ENCODE measurements at regions of chr17 and their contacts with region 1.

Region 1: GRCh38 chr17:4565209-4566141 is 5.1 kb upstream of the GGT6 start:
- DNase-seq: peak; percentile 55
- ATAC-seq: peak; percentile 85
- H3K4me3 ChIP-seq: no peak overlapping the region
- H3K27ac ChIP-seq: no peak overlapping the region
- H3K4me1 ChIP-seq: no peaks in the 10 kb centered on the region
- H3K27me3 ChIP-seq: no peaks in the 10 kb centered on the region
- CTCF ChIP-seq: peak; percentile 92

Region 2: DNA sequence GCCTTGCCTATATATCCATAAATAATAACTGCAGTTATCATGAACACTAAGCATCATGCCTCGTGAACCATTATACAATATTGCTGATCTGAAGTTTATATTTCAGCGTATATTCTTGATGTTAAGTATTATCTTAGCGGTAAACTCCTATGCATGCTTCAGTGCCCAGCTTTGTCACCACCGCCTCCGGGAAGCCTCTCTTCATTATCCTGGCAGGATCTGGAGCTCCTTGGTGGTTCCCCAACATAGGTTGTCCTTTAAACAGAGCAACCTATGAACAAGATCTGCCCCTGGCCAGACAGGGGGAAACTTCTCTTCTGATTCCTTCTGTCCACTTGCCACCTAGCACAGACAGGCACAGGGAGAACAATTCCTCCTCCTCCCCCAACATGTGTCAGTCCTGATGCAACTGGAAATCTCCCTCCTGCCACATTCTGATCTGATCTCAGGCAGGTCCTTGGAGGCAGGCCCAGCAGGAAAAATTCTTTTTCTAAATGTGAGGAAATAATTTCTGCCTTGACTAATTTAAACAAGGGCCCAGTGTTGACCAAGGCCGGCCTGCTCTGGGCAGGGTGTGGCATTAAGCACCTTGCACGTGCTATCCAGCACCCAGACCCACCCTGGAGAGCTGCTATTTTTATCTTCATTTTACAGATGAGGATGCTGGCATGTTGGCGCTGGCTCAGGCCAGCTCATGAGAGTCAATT is 44.4 kb before region 1 on chr17:
- CTCF ChIA-PET with region 1: no interaction called
- POLR2A ChIA-PET with region 1: no interaction called
- in situ Hi-C with region 1: no loop called
- intact Hi-C with region 1: no loop called
- DNase-seq: no peak
- ATAC-seq: no peak
- H3K4me3 ChIP-seq: no peak overlapping the region
- H3K27ac ChIP-seq: no peak overlapping the region
- H3K4me1 ChIP-seq: no peaks in the 10 kb centered on the region
- H3K27me3 ChIP-seq: no peaks in the 10 kb centered on the region
- CTCF ChIP-seq: no peak

Region 3: DNA sequence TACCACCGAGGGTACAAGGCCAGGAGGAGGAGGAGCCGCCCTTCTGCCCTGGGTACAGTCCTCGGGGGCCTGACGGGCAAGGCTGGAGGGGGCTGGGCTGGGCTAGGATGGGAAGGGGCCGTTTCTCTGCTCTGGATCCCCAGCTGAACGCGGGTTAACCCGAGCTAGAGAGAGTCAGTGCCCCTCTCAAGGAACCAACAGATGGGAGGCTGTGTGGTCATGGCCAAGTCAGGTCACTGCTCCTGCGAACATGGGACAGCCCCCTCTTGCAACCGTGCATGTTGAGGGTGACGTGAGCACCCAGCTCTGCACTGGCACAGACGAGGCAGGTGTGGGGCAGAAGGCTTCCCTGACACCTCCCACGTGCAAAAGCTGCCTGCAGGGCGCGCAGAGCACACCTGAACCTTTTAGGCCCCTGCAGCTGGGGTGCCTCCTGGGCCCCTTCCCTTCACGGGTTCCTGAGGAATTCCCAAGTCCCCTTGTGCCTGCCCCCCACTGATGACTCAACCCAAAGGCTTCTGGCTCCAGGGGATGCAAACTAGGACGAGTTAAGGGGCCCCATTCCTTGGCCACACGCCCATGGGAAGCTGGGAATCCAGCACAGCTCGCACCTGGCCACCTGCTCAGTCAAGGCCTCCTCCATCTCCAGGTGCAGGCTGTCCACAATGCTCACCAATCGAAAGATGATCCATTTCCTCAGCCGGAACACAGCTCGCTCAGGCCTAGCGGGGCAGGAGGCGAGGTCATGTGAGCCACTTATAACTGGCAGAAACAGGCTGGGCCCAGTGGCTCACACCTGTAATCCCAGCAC is 16.5 kb before region 1 on chr17:
- CTCF ChIA-PET with region 1: interaction called, 10 read pairs
- POLR2A ChIA-PET with region 1: no interaction called
- in situ Hi-C with region 1: no loop called
- intact Hi-C with region 1: no loop called
- DNase-seq: no peak
- ATAC-seq: no peak
- H3K4me3 ChIP-seq: no peak overlapping the region
- H3K27ac ChIP-seq: no peak overlapping the region
- H3K4me1 ChIP-seq: peaks cover 7% of the 10 kb centered on the region
- H3K27me3 ChIP-seq: no peaks in the 10 kb centered on the region
- CTCF ChIP-seq: no peak

Region 4: DNA sequence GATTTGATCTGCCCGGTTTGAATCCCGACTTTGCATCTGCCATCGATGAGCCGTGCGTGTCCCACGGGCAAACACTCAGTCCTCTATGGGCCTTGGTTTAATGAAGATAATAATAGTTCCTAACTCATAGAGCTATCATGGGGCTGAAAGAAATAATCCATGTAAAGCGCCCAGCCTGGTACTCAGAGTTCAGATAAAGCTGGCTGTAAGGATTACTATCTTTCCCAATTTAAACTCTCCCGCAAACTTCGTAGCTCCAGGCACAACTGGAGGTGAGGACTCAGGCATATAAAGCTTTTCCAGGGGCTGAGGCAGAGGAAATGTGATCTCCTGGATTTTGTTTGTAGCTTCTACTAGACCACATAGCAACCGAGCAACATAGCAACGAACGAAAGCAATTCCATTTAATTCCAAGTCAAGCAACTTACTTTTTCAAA is 59.7 kb after region 1 on chr17:
- CTCF ChIA-PET with region 1: interaction called, 25 read pairs
- POLR2A ChIA-PET with region 1: no interaction called
- in situ Hi-C with region 1: no loop called
- intact Hi-C with region 1: loop called (anchors 1 kb)
- DNase-seq: no peak
- ATAC-seq: no peak
- H3K4me3 ChIP-seq: no peak overlapping the region
- H3K27ac ChIP-seq: no peak overlapping the region
- H3K4me1 ChIP-seq: no peaks in the 10 kb centered on the region
- H3K27me3 ChIP-seq: no peaks in the 10 kb centered on the region
- CTCF ChIP-seq: no peak